ENCODE measurements at regions of chr2 and their contacts with region 1.

Region 1: GRCh38 chr2:77484026-77484425 is 38.1 kb downstream of the LRRTM4 start:
- DNase-seq: no peak
- H3K4me3 ChIP-seq: no peak overlapping the region
- H3K27ac ChIP-seq: no peak overlapping the region
- H3K4me1 ChIP-seq: no peaks in the 10 kb centered on the region
- H3K27me3 ChIP-seq: no peaks in the 10 kb centered on the region
- CTCF ChIP-seq: no peak
- POLR2A ChIP-seq: no peak

Region 2: GRCh38 chr2:77387324-77387723 is 96.7 kb before region 1 on chr2:
- intact Hi-C with region 1: loop called (anchors 5 kb)
- DNase-seq: no peak
- H3K4me3 ChIP-seq: no peak overlapping the region
- H3K27ac ChIP-seq: no peak overlapping the region
- H3K4me1 ChIP-seq: no peaks in the 10 kb centered on the region
- H3K27me3 ChIP-seq: no peaks in the 10 kb centered on the region
- CTCF ChIP-seq: no peak
- POLR2A ChIP-seq: no peak